Activated T-helper 2 cell treated with anti-CD3 and anti-CD28 coated beads, Interferon-gamma antibody, Interleukin-2, Interleukin-4, amounts not matched to agents 10 μg/mL and 5 μg/mL and 100 μg/mL, durations not matched to agents 14 hours and 24 hours and 36 hours (primary cell): ENCODE measurements at regions of chr1 and their contacts with region 1.

Region 1: DNA sequence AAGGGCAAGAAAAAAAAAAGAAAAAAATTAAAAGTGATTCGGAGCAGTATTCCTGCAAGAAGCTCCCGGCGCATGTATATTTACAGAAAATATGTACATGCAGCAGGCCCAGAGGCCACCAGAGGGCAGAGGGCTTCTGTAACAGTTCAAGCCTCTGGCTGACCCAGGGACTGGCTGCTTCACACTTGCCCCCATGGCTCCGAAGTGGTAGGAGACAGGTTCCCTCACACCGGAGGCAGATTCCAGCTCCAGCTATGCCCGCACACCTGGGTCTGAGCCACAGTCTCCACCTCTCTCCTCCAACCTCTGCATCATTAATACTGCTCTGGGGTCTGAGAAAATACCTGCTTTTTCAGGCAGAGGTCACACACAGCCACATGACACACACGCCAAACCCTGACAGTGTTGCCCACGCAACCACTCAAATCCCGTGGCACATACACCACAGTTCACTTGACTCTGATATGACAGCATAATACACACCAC is 2.2 kb upstream of the ARHGAP30 start:
- DNase-seq: no peak
- H3K4me3 Mint-ChIP-seq: no peak overlapping the region
- H3K27ac Mint-ChIP-seq: no peak overlapping the region
- H3K4me1 Mint-ChIP-seq: peaks cover 29% of the 10 kb centered on the region
- H3K27me3 Mint-ChIP-seq: no peaks in the 10 kb centered on the region

Region 2: DNA sequence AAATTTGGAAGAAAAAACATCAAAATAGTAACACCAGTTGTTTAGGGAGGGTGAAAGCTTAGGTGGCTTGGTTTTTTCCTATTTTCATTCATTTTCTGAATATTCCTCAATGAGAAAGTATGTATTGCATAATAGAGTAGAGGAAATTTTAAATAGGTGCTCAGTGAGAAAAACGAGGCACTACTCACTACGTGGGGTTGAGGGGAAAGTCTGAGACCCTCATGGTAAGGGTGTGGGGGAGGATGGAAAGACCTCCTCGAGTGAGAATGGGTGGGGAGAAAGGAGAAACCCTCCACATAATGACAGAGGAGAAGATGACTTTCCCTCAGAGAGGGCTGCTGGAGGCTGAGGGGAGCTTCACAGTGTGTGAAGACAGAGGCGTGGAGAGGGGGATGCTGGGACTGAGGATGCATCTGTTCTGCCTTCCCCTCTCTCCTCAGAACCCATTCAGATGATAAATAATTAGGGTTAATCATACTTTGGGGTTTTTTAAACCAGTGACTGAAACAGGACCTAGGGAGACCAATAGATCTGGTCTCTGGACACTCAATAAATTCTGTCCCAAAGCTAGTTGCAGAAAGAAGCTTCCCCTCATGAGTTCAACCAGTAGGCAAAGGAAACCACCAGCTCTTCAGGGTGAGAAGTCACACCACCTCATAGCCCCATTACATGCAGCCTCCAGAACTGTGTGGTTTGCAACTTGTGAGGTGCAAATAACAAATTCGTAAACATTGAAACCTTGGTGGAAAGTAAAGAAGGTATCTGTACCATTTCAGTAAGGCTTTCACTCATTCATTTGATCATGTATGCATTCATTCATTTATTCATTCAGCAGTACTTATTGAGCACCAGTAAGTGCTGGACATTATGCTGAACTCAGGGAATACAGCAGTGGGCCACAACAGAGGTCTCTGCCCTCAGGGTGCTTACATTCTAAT is 315.7 kb before region 1 on chr1:
- intact Hi-C with region 1: no loop called
- DNase-seq: no peak
- H3K4me3 Mint-ChIP-seq: no peak overlapping the region
- H3K27ac Mint-ChIP-seq: peak overlapping the region; percentile 54
- H3K4me1 Mint-ChIP-seq: peaks cover 41% of the 10 kb centered on the region
- H3K27me3 Mint-ChIP-seq: no peaks in the 10 kb centered on the region

Region 3: GRCh38 chr1:161045750-161046571 is 26.0 kb before region 1 on chr1 and contains the start of gene USF1:
- intact Hi-C with region 1: loop called (anchors 1 kb)
- DNase-seq: peak; percentile 92
- H3K4me3 Mint-ChIP-seq: peak within 1 kb of the TSS; percentile 95
- H3K27ac Mint-ChIP-seq: peak within 1 kb of the TSS; percentile 100
- H3K4me1 Mint-ChIP-seq: peaks cover 33% of the 10 kb centered on the region
- H3K27me3 Mint-ChIP-seq: no peaks in the 10 kb centered on the region
- total RNA-seq, gene USF1: 49.1 and 53.2 TPM in 2 replicates

Region 4: DNA sequence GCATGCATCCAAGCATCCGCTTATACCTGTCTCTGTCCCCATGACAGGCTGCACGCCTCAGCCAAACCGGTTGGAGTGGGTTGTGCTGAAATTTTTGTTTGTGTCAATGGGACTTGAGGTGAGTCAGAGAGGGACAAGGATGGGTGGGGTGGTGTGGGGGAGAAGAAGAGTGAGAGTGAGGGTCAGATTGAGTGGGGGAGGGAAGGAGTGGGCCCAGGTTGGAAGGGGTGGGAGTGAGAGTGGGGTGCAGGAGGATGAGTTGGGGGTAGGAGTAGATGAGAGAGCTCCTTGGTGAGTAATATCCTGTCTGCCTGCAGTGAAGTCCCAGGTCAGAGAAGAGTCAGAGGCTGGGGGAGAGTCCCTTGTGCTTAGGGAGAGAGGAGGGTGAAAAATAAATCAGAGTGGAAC is 20.7 kb after region 1 on chr1:
- intact Hi-C with region 1: loop called (anchors 1 kb)
- DNase-seq: no peak
- H3K4me3 Mint-ChIP-seq: no peak overlapping the region
- H3K27ac Mint-ChIP-seq: peak overlapping the region; percentile 57
- H3K4me1 Mint-ChIP-seq: peaks cover 54% of the 10 kb centered on the region
- H3K27me3 Mint-ChIP-seq: no peaks in the 10 kb centered on the region

Region 5: DNA sequence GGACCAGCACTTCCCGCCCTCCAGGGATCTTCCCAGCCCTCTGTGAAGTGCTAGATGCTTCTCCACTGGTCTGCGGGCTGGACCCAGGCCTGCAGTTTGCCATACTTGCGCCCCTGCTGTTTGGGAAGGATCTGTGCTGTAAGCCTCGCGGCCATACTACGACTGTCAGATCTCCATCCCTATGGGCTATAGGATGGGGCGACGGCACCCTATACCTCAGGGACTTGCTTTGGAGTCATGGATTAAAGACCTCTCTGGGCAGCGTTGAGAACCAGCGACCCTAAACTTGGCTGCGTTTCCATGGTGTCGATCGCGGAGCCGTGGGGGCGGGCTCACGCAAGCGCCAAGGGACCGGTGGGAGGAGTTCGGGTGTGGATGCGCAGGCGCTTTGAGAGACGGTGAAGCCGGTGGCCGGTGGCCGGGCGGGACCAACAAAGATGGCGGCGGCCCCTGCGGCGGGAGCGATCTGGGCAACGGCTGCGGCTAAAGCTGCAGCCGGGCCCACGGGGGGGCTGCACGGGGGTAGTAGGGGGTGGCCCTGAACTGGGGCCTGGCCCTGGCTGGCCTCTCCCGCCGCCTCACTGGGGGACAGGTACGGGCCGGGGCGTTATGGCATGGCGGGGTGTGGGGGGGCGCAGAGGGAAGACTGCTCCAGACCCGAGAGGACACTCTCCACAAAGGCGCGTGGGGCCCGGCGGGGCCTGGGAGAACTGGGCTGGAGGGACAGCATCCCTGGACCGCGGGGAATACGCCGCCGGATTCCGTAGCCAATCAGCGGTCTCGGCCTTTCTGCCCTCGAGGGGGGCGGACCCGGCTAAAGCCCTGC is 87.4 kb after region 1 on chr1 and contains the start of gene USP21:
- intact Hi-C with region 1: loop called (anchors 5 kb)
- DNase-seq: peak; percentile 89
- H3K4me3 Mint-ChIP-seq: peak within 1 kb of the TSS; percentile 86
- H3K27ac Mint-ChIP-seq: peak within 1 kb of the TSS; percentile 92
- H3K4me1 Mint-ChIP-seq: peaks cover 43% of the 10 kb centered on the region
- H3K27me3 Mint-ChIP-seq: no peaks in the 10 kb centered on the region
- total RNA-seq, gene USP21: 31.9 and 33.0 TPM in 2 replicates

Region 6: GRCh38 chr1:162117039-162117774 is 1045.3 kb after region 1 on chr1:
- intact Hi-C with region 1: no loop called
- DNase-seq: no peak
- H3K4me3 Mint-ChIP-seq: no peak overlapping the region
- H3K27ac Mint-ChIP-seq: no peak overlapping the region
- H3K4me1 Mint-ChIP-seq: no peaks in the 10 kb centered on the region
- H3K27me3 Mint-ChIP-seq: peaks cover 3% of the 10 kb centered on the region